Left cardiac atrium (tissue), 4 donors: ENCODE measurements at regions of chr4 and their contacts with region 1.

Region 1: DNA sequence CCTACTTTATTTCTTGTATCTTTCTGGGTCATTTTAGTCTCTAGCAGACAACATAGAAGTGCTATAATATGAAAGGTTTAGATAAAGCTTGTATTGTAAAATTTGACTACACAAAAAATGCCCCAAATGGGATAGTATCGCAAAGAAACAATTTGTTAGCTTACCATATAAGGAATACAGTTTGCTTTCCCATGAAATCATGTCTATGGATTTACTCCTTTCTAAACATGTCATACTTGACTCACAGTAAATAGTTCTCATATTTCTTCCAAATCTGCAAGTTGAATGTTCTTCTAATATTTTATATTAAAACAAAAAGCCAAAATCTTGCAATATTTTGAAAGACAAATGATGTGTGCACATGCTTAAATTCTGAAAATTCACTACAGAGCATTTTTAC is 103.9 kb downstream of the PPA2 start:
- DNase-seq: no peak
- ATAC-seq: no peak

Region 2: DNA sequence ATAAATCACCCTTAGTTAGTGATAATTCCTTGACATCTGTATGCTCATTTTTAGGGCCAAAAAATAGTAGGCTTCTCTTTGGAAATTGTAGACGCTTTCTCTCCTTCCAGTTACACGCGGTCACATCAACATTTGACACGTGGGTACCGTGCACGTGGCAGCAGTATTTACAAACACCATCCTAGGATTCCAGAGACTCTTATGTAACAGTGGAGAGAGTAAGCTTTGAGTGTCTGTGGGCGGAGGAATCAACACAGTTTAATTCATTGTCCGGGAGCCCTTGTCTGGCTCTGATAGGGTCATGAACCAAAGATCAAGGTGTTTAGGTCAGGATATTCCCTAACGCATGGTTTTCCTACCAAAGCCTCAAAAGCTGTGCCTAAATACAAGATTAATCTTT is 211.2 kb before region 1 on chr4:
- intact Hi-C with region 1: loop called in 1 of 2 experiments (anchors 10 kb)
- DNase-seq: no peak
- ATAC-seq: peak; percentile 82 to 93